CD4-positive, alpha-beta memory T cell (primary cell): ENCODE measurements at regions of chr22 and their contacts with region 1.

Region 1: GRCh38 chr22:41910050-41911000 is 4.5 kb downstream of the SHISA8 start:
- DNase-seq: peak in 4 of 5 donors; percentile 34 to 54 (median 41)
- H3K4me3 ChIP-seq: peak overlapping the region in 1 of 2 donors; percentile 9
- H3K4me3 Mint-ChIP-seq: peak overlapping the region in 7 of 8 donors; percentile 46 to 80 (median 65)
- H3K27ac ChIP-seq: no peak overlapping the region
- H3K27ac Mint-ChIP-seq: no peak overlapping the region
- H3K4me1 ChIP-seq: peaks cover 43% of the 10 kb centered on the region
- H3K4me1 Mint-ChIP-seq: peaks cover 16 to 42% (median 26%) of the 10 kb centered on the region in 4 donors
- H3K27me3 ChIP-seq: peaks cover 20% of the 10 kb centered on the region
- H3K27me3 Mint-ChIP-seq: peaks cover 20 to 25% of the 10 kb centered on the region in 2 donors

Region 2: DNA sequence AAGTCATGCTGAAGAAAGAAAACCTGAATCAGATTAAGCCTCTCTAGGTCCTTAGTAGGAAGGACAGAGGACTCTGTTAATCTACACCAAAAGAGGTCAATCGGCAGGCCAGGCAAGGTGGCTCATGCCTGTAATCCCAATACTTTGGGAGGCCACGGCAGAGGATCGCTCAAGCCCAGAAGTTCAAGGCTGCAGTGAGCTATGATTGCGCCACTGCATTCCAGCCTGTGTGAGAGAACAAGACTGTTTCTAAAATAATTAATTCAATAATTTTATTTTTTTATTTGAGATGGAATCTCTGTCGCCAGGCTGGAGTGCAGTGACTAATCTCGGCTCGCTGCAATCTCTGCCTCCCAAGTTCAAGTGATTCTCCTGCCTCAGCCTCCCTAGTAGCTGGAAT is 284.7 kb before region 1 on chr22:
- CTCF ChIA-PET with region 1: no interaction called
- POLR2A ChIA-PET with region 1: no interaction called
- intact Hi-C with region 1: no loop called
- DNase-seq: no peak
- H3K4me3 ChIP-seq: no peak overlapping the region
- H3K4me3 Mint-ChIP-seq: no peak overlapping the region
- H3K27ac ChIP-seq: no peak overlapping the region
- H3K27ac Mint-ChIP-seq: peak overlapping the region in 1 of 7 donors; percentile 19
- H3K4me1 ChIP-seq: peaks cover 19% of the 10 kb centered on the region
- H3K4me1 Mint-ChIP-seq: peaks cover 8 to 27% (median 19%) of the 10 kb centered on the region in 4 donors
- H3K27me3 ChIP-seq: no peaks in the 10 kb centered on the region
- H3K27me3 Mint-ChIP-seq: no peaks in the 10 kb centered on the region

Region 3: GRCh38 chr22:41873391-41873790 is 36.9 kb before region 1 on chr22:
- CTCF ChIA-PET with region 1: no interaction called
- POLR2A ChIA-PET with region 1: no interaction called
- intact Hi-C with region 1: no loop called
- DNase-seq: peak; percentile 47 to 65 (median 54)
- H3K4me3 ChIP-seq: no peak overlapping the region
- H3K4me3 Mint-ChIP-seq: peak overlapping the region in 5 of 8 donors; percentile 1 to 40 (median 11)
- H3K27ac ChIP-seq: no peak overlapping the region
- H3K27ac Mint-ChIP-seq: peak overlapping the region; percentile 81 to 93 (median 89)
- H3K4me1 ChIP-seq: peaks cover 6% of the 10 kb centered on the region
- H3K4me1 Mint-ChIP-seq: peaks cover 7 to 12% (median 12%) of the 10 kb centered on the region in 4 donors
- H3K27me3 ChIP-seq: no peaks in the 10 kb centered on the region
- H3K27me3 Mint-ChIP-seq: no peaks in the 10 kb centered on the region

Region 4: DNA sequence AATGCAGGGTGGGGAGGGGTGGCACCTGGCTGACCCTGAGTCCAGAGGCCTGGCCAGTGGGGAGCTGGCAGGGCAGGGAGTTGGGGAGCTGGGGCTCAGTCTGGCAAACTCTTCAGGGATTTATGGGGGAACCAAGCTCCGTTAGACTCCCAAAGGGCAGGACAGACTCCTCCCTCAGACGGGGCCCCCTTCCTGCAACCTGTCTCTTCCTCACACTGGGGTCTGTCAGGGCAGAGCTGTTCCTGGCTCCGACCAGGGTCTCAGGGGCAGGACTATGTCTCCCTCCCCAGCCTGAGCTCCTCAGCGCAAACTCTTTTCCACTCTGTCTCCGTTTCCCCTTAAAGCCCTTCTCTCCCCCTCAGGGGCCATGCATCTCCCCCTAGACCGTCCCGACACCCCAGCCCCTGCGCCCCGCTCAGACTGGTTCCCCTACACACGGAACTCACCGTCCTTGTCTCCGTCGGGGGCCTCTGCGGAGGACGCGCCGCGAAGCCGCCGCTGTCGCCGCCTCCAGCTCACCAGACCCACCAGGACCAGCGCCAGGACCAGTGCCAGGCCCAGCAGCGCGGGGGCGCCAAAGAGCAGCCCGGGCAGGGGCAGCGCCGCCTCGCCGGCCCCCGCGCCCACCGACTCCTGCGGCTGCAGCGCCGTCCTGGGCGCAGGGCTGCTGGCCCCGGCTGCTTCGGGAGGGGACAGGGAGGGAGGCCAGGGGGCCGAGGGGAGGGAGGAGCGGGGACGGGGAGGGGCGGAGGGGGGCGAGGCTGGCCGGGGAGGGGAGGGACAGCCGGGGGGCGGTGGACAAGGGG is 15.5 kb after region 1 on chr22:
- CTCF ChIA-PET with region 1: interaction called, 7 read pairs
- POLR2A ChIA-PET with region 1: interaction called, 24 read pairs
- intact Hi-C with region 1: no loop called
- DNase-seq: peak; percentile 73 to 82 (median 77)
- H3K4me3 ChIP-seq: peak overlapping the region in 1 of 2 donors; percentile 43
- H3K4me3 Mint-ChIP-seq: peak overlapping the region; percentile 73 to 87 (median 82)
- H3K27ac ChIP-seq: no peak overlapping the region
- H3K27ac Mint-ChIP-seq: peak overlapping the region; percentile 57 to 83 (median 71)
- H3K4me1 ChIP-seq: peaks cover 15% of the 10 kb centered on the region
- H3K4me1 Mint-ChIP-seq: peaks cover 3 to 25% (median 9%) of the 10 kb centered on the region in 4 donors
- H3K27me3 ChIP-seq: no peaks in the 10 kb centered on the region
- H3K27me3 Mint-ChIP-seq: no peaks in the 10 kb centered on the region

Region 5: GRCh38 chr22:41976401-41976901 is 66.1 kb after region 1 on chr22:
- CTCF ChIA-PET with region 1: no interaction called
- POLR2A ChIA-PET with region 1: no interaction called
- intact Hi-C with region 1: no loop called
- DNase-seq: peak in 4 of 5 donors; percentile 38 to 50 (median 43)
- H3K4me3 ChIP-seq: peak overlapping the region in 1 of 2 donors; percentile 28
- H3K4me3 Mint-ChIP-seq: peak overlapping the region; percentile 49 to 79 (median 71)
- H3K27ac ChIP-seq: no peak overlapping the region
- H3K27ac Mint-ChIP-seq: peak overlapping the region in 1 of 7 donors; percentile 4
- H3K4me1 ChIP-seq: peaks cover 11% of the 10 kb centered on the region
- H3K4me1 Mint-ChIP-seq: peaks cover 13 to 21% (median 16%) of the 10 kb centered on the region in 4 donors
- H3K27me3 ChIP-seq: peaks cover 17% of the 10 kb centered on the region
- H3K27me3 Mint-ChIP-seq: peaks cover 22 to 33% of the 10 kb centered on the region in 2 donors